WTC11 (cell line): ENCODE measurements at regions of chr10 and their contacts with region 1.

Region 1: DNA sequence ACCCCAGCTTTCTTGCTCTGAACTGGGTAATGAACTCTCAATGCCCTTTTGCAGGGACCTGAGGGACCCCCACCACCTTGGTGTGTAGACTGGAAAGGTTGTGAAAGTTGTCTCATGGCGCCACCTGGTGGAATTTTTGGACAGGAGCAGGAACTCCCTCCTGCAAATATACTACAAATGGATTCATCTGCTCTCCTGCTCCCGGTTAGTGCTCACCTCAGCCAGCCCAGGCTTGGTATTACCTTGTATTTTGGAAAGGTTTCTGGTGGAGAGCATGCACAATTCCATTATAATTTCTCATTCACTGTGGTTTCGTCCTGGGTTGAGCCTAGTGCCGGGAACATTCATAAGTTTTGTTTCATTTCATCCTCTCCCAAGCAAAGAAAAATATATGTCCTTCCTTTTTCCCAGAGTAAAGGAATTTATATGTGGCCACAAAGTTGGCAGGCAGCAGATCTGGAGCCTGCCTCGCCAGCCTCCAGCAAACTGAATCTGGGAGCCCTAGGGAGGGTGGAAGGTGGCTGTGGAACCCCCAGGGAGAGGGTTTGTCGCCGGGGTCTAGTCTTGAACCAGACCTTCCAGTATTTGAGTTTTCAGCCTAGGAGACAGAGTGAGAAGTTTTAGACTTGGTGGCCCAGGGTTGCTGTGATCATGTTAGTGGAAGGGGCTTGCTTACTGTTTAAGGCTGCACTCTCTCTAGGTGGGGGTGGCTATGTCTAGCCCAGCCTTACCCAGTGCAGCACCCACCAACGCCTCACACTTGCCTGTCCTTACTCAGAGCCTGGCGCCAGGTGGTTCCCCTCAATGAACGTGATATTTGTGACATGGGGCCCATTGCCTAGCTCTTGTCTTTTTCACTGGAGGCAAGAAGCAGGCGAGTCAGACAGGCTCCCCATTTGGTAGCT is 9.5 kb downstream of the FAM241B start:
- DNase-seq: peak; percentile 81
- ATAC-seq: peak; percentile 76
- H3K4me3 Mint-ChIP-seq: no peak overlapping the region
- H3K27ac Mint-ChIP-seq: 0 out of 2 replicates have a peak overlapping the region, but pooled peaks have one; percentile 4
- H3K4me1 Mint-ChIP-seq: peaks cover 13% of the 10 kb centered on the region
- H3K27me3 Mint-ChIP-seq: no peaks in the 10 kb centered on the region; the same call in 1 of the 2 replicates
- CTCF ChIP-seq: peak; percentile 89

Region 2: GRCh38 chr10:69527961-69528360 is 111.6 kb before region 1 on chr10:
- CTCF ChIA-PET with region 1: interaction called, 37 read pairs
- POLR2A ChIA-PET with region 1: no interaction called
- DNase-seq: no peak
- ATAC-seq: no peak
- H3K4me3 Mint-ChIP-seq: no peak overlapping the region
- H3K27ac Mint-ChIP-seq: no peak overlapping the region
- H3K4me1 Mint-ChIP-seq: peaks cover 1% of the 10 kb centered on the region; the same call in 1 of the 2 replicates
- H3K27me3 Mint-ChIP-seq: peaks cover 8% of the 10 kb centered on the region
- CTCF ChIP-seq: no peak

Region 3: GRCh38 chr10:69573056-69573806 is 66.3 kb before region 1 on chr10 and contains the start of gene NEUROG3:
- CTCF ChIA-PET with region 1: interaction called, 117 read pairs
- POLR2A ChIA-PET with region 1: no interaction called
- DNase-seq: peak; percentile 56
- ATAC-seq: peak; percentile 2; the same call in 1 of the 2 replicates
- H3K4me3 Mint-ChIP-seq: peak within 1 kb of the TSS; percentile 88
- H3K27ac Mint-ChIP-seq: peak within 1 kb of the TSS; percentile 74; the same call in 1 of the 2 replicates
- H3K4me1 Mint-ChIP-seq: peaks cover 73% of the 10 kb centered on the region
- H3K27me3 Mint-ChIP-seq: peaks cover 100% of the 10 kb centered on the region
- CTCF ChIP-seq: no peak
- total RNA-seq, gene NEUROG3: 1.9 to 2.4 TPM (median 2.0 TPM) in 3 replicates

Region 4: GRCh38 chr10:69588386-69588785 is 51.2 kb before region 1 on chr10:
- CTCF ChIA-PET with region 1: interaction called, 17 read pairs
- POLR2A ChIA-PET with region 1: no interaction called
- DNase-seq: no peak
- ATAC-seq: peak; percentile 85
- H3K4me3 Mint-ChIP-seq: no peak overlapping the region
- H3K27ac Mint-ChIP-seq: no peak overlapping the region
- H3K4me1 Mint-ChIP-seq: peaks cover 8% of the 10 kb centered on the region
- H3K27me3 Mint-ChIP-seq: peaks cover 18% of the 10 kb centered on the region
- CTCF ChIP-seq: no peak

Region 5: GRCh38 chr10:69649786-69650555 is 10.4 kb after region 1 on chr10:
- CTCF ChIA-PET with region 1: interaction called, 256 read pairs
- POLR2A ChIA-PET with region 1: no interaction called
- DNase-seq: peak; percentile 43
- ATAC-seq: peak; percentile 66
- H3K4me3 Mint-ChIP-seq: no peak overlapping the region
- H3K27ac Mint-ChIP-seq: no peak overlapping the region
- H3K4me1 Mint-ChIP-seq: peaks cover 50% of the 10 kb centered on the region
- H3K27me3 Mint-ChIP-seq: no peaks in the 10 kb centered on the region
- CTCF ChIP-seq: no peak

Region 6: GRCh38 chr10:69716711-69717560 is 77.4 kb after region 1 on chr10:
- CTCF ChIA-PET with region 1: interaction called, 140 read pairs
- POLR2A ChIA-PET with region 1: interaction called, 3 read pairs
- DNase-seq: peak; percentile 84
- ATAC-seq: peak; percentile 88
- H3K4me3 Mint-ChIP-seq: no peak overlapping the region
- H3K27ac Mint-ChIP-seq: 0 out of 2 replicates have a peak overlapping the region, but pooled peaks have one; percentile 8
- H3K4me1 Mint-ChIP-seq: peaks cover 7% of the 10 kb centered on the region
- H3K27me3 Mint-ChIP-seq: peaks cover 8% of the 10 kb centered on the region
- CTCF ChIP-seq: peak; percentile 80

Region 7: DNA sequence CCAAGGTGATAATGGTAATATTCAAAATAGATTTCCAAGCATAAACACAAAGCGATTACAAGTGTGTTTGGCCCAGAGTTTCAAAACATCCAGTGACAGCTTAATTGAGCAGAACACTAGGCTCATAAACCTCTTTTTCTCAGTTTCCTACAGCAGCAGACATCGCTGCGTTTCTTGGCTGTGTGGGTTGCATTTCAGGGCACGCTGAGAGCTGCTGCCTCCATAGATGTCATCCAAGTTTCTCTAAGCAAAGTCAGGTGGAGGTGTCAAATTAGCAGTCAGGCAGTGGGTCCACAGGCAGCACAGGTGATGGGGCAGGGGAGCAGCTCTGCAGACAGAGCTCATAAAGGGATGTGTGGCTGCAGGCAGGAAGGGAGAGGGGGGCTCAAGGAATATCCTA is 111.7 kb after region 1 on chr10:
- CTCF ChIA-PET with region 1: no interaction called
- POLR2A ChIA-PET with region 1: no interaction called
- DNase-seq: no peak
- ATAC-seq: no peak
- H3K4me3 Mint-ChIP-seq: no peak overlapping the region
- H3K27ac Mint-ChIP-seq: no peak overlapping the region
- H3K4me1 Mint-ChIP-seq: peaks cover 9% of the 10 kb centered on the region
- H3K27me3 Mint-ChIP-seq: peaks cover 18% of the 10 kb centered on the region
- CTCF ChIP-seq: no peak

Region 8: GRCh38 chr10:70007116-70007820 is 367.7 kb after region 1 on chr10:
- CTCF ChIA-PET with region 1: no interaction called
- POLR2A ChIA-PET with region 1: no interaction called
- DNase-seq: no peak
- ATAC-seq: no peak
- H3K4me3 Mint-ChIP-seq: no peak overlapping the region
- H3K27ac Mint-ChIP-seq: no peak overlapping the region
- H3K4me1 Mint-ChIP-seq: no peaks in the 10 kb centered on the region
- H3K27me3 Mint-ChIP-seq: peaks cover 20% of the 10 kb centered on the region
- CTCF ChIP-seq: no peak